GM12878 (cell line): ENCODE measurements at regions of chr9 and their contacts with region 1.

Region 1: DNA sequence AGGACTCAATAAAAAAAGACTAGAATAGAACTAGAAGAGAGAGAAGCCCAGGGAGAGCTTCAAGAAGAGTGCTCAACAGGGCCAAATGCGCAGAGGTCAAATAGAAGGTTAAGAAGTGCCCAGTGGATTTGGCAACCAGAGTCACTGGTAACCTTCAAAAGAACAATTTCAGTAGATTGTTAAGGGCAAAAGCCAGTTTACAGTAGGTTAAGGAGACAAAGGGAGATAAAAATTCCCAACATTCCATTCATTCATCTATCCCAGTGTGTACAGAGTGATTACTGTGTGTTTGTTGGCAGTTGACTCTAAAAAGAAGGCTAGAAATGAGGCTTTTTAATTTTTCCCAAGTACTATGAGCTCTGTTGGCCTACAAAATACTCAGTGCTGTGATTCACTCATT is 69.4 kb downstream of the RIGI start:
- DNase-seq: no peak
- ATAC-seq: no peak
- H3K4me3 ChIP-seq: no peak overlapping the region
- H3K27ac ChIP-seq: no peak overlapping the region
- H3K4me1 ChIP-seq: no peaks in the 10 kb centered on the region
- H3K27me3 ChIP-seq: no peaks in the 10 kb centered on the region
- CTCF ChIP-seq: no peak
- EP300 ChIP-seq: no peak
- POLR2A ChIP-seq: no peak
- RAD21 ChIP-seq: no peak

Region 2: DNA sequence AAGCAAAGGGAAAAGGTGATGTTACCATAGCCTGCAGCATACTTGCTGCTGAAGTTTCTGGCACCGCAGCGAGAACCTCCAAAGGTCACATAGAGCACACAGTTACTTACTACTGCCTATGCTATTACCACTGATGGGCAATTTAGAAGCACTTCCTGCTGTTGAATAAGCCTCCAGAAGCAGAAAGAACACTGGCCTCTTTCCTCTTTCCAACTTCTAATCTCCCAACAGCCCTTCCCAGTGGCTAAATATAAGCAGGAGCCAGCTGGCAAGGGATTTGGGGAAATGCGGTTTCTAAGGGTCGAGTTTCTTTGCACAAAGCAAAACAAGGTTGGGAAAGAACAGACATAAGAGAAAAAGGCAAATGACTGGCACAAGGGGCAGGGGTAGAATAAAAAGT is 741.3 kb before region 1 on chr9:
- CTCF ChIA-PET with region 1: no interaction called
- POLR2A ChIA-PET with region 1: no interaction called
- RAD21 ChIA-PET with region 1: no interaction called
- SMC1A ChIA-PET with region 1: no interaction called
- in situ Hi-C with region 1: no loop called
- intact Hi-C with region 1: no loop called
- DNase-seq: no peak
- ATAC-seq: no peak
- H3K4me3 ChIP-seq: no peak overlapping the region
- H3K27ac ChIP-seq: no peak overlapping the region
- H3K4me1 ChIP-seq: no peaks in the 10 kb centered on the region
- H3K27me3 ChIP-seq: no peaks in the 10 kb centered on the region
- CTCF ChIP-seq: no peak
- EP300 ChIP-seq: no peak
- POLR2A ChIP-seq: no peak
- RAD21 ChIP-seq: no peak

Region 3: GRCh38 chr9:32326146-32326545 is 130.4 kb before region 1 on chr9:
- CTCF ChIA-PET with region 1: no interaction called
- POLR2A ChIA-PET with region 1: no interaction called
- RAD21 ChIA-PET with region 1: no interaction called
- SMC1A ChIA-PET with region 1: no interaction called
- in situ Hi-C with region 1: no loop called
- intact Hi-C with region 1: no loop called
- DNase-seq: no peak
- ATAC-seq: no peak
- H3K4me3 ChIP-seq: no peak overlapping the region
- H3K27ac ChIP-seq: no peak overlapping the region
- H3K4me1 ChIP-seq: no peaks in the 10 kb centered on the region
- H3K27me3 ChIP-seq: no peaks in the 10 kb centered on the region
- CTCF ChIP-seq: no peak
- EP300 ChIP-seq: no peak
- POLR2A ChIP-seq: no peak
- RAD21 ChIP-seq: no peak

Region 4: DNA sequence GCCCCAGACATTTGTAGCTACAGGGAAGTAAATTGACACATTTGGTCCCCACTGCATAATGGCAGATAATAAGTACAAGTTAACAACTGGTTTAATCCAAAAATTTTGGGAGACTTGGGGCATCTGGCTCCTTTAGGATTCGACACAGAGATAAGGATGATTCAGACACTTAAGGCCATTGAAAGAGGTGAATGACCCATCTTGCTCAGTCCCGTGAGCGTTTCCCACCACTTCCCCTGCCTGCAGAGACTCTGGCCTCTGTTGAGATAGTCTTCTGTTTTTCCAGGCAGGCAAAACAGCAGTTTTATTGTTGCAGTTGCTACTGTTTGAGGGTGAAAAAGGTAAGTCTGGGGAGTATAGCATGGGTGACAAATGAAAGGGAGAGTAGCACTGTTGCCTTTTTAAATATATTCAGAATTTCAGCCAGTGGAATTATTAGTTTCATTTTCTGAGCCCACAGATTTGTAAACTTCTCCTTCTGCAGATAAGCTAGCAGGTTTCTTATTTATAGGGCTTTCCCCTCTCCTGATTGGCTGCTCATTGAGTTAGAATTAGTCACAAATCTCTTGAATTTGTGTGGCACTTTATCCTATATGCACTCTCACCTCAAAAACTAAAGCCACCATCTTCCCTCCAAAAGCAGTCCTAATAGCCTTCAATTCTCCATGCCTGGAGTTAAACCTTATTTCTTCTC is 52.9 kb before region 1 on chr9:
- CTCF ChIA-PET with region 1: no interaction called
- POLR2A ChIA-PET with region 1: no interaction called
- RAD21 ChIA-PET with region 1: no interaction called
- SMC1A ChIA-PET with region 1: no interaction called
- in situ Hi-C with region 1: no loop called
- intact Hi-C with region 1: loop called (anchors 5 kb)
- DNase-seq: no peak
- ATAC-seq: no peak
- H3K4me3 ChIP-seq: no peak overlapping the region
- H3K27ac ChIP-seq: no peak overlapping the region
- H3K4me1 ChIP-seq: peaks cover 3% of the 10 kb centered on the region; the same call in 1 of the 2 replicates
- H3K27me3 ChIP-seq: no peaks in the 10 kb centered on the region
- CTCF ChIP-seq: no peak
- EP300 ChIP-seq: no peak
- POLR2A ChIP-seq: no peak
- RAD21 ChIP-seq: no peak

Region 5: DNA sequence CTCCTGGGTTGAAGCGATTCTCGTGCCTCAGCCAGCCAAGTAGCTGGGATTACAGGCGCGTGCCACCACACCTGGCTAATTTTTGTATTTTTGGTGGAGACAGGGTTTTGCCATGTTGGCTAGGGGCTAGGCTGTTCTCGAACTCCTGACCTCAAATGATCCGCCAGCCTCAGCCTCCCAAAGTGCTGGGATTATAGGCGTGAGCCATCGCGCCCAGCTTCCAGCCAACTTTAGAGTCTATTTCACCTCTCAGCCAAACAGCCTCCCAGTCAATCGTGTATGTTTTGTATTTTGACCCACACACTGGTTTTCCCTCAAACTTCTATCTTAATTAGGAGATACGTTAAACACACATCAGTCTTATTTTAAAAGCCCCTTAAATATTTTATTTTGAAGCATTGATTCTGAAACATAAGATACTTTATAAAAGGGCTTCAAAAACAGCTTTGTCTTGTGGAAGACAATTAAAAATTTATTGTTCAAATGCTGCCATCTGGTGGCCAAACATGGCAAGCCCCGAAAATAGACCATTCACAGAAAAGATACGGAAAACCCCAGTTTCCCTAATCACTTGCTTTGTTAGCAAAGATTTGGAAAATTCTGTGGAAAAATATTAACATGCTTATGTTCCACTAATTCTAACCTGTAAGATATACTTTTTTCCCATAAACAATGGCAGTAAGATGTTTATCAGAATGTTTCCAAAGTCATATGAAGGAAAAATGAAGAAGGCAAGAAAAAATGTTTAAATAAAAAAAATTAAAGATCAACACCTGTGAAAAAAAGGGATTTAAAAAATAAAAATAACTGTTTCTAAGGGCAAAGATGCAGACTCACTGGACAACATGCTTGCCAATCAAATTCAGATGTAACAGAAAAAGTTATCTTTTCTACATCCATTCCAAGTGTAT is 511.8 kb after region 1 on chr9:
- CTCF ChIA-PET with region 1: interaction called, 3 read pairs
- POLR2A ChIA-PET with region 1: no interaction called
- RAD21 ChIA-PET with region 1: no interaction called
- SMC1A ChIA-PET with region 1: no interaction called
- in situ Hi-C with region 1: no loop called
- intact Hi-C with region 1: loop called (anchors 10 kb)
- DNase-seq: no peak
- ATAC-seq: peak; percentile 61
- H3K4me3 ChIP-seq: no peak overlapping the region
- H3K27ac ChIP-seq: no peak overlapping the region
- H3K4me1 ChIP-seq: no peaks in the 10 kb centered on the region
- H3K27me3 ChIP-seq: no peaks in the 10 kb centered on the region
- CTCF ChIP-seq: peak; percentile 61 to 73 (median 72)
- EP300 ChIP-seq: no peak
- POLR2A ChIP-seq: no peak
- RAD21 ChIP-seq: peak; percentile 75

Region 6: DNA sequence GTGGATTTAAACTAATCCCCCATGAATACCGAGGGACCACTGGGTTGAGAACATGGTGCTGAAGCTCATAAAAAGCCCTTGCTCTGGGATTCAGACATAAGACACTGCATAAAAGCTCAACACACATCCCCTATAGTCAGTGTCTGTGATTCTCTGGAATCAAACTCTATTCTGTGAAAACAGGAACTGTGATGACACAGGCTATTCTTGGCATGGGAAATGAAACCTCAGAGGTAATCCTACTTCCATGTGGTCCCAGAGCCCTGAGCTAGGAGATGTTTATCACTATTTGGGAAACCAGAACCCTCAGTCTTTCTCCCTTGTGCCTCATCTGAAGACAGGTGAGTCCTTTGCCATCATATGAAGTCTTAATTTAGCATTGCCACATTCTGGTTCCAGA is 1203.4 kb after region 1 on chr9:
- CTCF ChIA-PET with region 1: no interaction called
- POLR2A ChIA-PET with region 1: no interaction called
- RAD21 ChIA-PET with region 1: no interaction called
- SMC1A ChIA-PET with region 1: no interaction called
- in situ Hi-C with region 1: no loop called
- intact Hi-C with region 1: no loop called
- DNase-seq: no peak
- ATAC-seq: no peak
- H3K4me3 ChIP-seq: no peak overlapping the region
- H3K27ac ChIP-seq: no peak overlapping the region
- H3K4me1 ChIP-seq: no peaks in the 10 kb centered on the region
- H3K27me3 ChIP-seq: peaks cover 0 to 4% of the 10 kb centered on the region in 2 experiments; a peak in 2 of 4 replicates
- CTCF ChIP-seq: no peak
- EP300 ChIP-seq: no peak
- POLR2A ChIP-seq: no peak
- RAD21 ChIP-seq: no peak